ENCODE measurements at regions of chr7 and their contacts with region 1.

Region 1: GRCh38 chr7:99408379-99409191 is at the starts of genes BUD31 and PDAP1:
- DNase-seq: peak; percentile 85 to 95
- H3K4me3 ChIP-seq: peak within 1 kb of the TSS; percentile 99
- H3K27ac ChIP-seq: peak within 1 kb of the TSS; percentile 97
- H3K4me1 ChIP-seq: peaks cover 25% of the 10 kb centered on the region
- H3K27me3 ChIP-seq: no peaks in the 10 kb centered on the region
- CTCF ChIP-seq: no peak
- total RNA-seq, gene BUD31: 167 and 178 TPM in 2 replicates
- total RNA-seq, gene PDAP1: 141 and 180 TPM in 2 replicates

Region 2: GRCh38 chr7:99171731-99172130 is 236.9 kb before region 1 on chr7:
- CTCF ChIA-PET with region 1: no interaction called
- POLR2A ChIA-PET with region 1: no interaction called
- intact Hi-C with region 1: no loop called
- DNase-seq: no peak
- H3K4me3 ChIP-seq: no peak overlapping the region
- H3K27ac ChIP-seq: no peak overlapping the region
- H3K4me1 ChIP-seq: no peaks in the 10 kb centered on the region
- H3K27me3 ChIP-seq: no peaks in the 10 kb centered on the region
- CTCF ChIP-seq: no peak

Region 3: DNA sequence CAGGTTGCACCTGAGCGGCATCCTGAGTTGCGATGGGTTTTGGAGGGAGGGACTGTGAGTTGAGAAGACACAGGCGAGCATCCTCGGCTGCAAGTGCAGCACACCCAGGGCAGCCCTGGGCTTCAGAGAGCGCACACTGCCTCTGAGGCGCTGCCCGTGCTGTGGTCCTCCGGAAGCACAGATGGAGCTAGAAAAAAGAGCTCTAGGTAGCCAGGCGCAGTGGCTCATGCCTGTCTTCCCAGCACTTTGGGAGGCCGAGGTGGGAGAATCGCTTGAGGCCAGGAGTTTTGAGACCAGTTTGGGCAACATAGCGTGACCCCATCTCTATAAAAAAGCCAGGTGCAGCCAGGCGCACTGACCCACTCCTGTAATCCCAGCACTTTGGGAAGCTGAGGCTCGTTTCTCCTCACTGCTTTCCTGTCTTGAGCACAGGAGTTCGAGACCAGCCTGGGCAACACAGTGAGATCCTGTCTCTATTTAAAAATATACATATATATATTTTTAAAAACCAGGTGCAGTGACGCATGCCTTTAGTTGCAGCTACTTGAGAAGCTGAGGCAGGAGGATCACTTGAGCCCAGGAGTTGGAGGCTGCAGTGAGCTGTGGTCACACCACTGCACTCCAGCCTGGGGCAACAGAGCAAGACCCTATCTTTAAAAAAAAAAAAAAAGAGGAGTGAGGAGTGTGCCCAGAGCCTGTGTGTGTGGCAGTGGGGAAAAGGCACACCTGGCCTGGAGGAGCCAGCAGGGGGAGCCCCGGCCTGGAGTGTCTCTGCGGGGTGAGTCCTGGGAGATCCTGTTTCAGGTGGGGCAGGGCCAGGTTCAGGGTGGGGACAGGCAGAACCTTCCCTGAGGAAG is 43.4 kb before region 1 on chr7:
- CTCF ChIA-PET with region 1: no interaction called
- POLR2A ChIA-PET with region 1: no interaction called
- intact Hi-C with region 1: loop called (anchors 2 kb)
- DNase-seq: peak; percentile 56 to 80
- H3K4me3 ChIP-seq: no peak overlapping the region
- H3K27ac ChIP-seq: no peak overlapping the region
- H3K4me1 ChIP-seq: no peaks in the 10 kb centered on the region
- H3K27me3 ChIP-seq: no peaks in the 10 kb centered on the region
- CTCF ChIP-seq: peak; percentile 69

Region 4: GRCh38 chr7:99374103-99375064 is 34.2 kb before region 1 on chr7 and contains the start of gene ARPC1B:
- CTCF ChIA-PET with region 1: no interaction called
- POLR2A ChIA-PET with region 1: no interaction called
- intact Hi-C with region 1: loop called (anchors 2 kb)
- DNase-seq: peak; percentile 57 to 82
- H3K4me3 ChIP-seq: peak within 1 kb of the TSS; percentile 63
- H3K27ac ChIP-seq: no peak within 1 kb of the TSS
- H3K4me1 ChIP-seq: peaks cover 21% of the 10 kb centered on the region
- H3K27me3 ChIP-seq: no peaks in the 10 kb centered on the region
- CTCF ChIP-seq: no peak
- total RNA-seq, gene ARPC1B: 276 and 289 TPM in 2 replicates

Region 5: DNA sequence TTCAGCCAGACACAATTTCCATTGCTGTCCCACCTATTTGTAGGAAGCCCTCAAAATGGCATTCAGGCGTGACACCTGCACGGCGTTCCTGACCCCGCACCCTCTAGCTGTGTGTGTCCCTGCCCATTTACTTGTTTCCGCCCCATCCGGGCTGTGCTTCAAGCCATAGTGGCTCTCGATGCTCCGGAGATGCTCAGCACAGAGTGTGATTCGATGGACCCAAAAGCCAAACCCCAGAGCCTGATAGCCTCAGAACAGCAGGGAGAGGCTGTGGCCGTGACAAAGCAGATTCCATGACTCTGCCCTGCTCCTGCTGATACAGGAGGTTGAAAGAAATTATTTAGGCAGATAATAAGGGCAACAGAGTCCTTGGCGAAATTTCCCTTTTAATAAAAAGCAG is 13.6 kb after region 1 on chr7:
- CTCF ChIA-PET with region 1: no interaction called
- POLR2A ChIA-PET with region 1: interaction called, 11 read pairs
- intact Hi-C with region 1: no loop called
- DNase-seq: no peak
- H3K4me3 ChIP-seq: no peak overlapping the region
- H3K27ac ChIP-seq: no peak overlapping the region
- H3K4me1 ChIP-seq: no peaks in the 10 kb centered on the region
- H3K27me3 ChIP-seq: no peaks in the 10 kb centered on the region
- CTCF ChIP-seq: no peak

Region 6: DNA sequence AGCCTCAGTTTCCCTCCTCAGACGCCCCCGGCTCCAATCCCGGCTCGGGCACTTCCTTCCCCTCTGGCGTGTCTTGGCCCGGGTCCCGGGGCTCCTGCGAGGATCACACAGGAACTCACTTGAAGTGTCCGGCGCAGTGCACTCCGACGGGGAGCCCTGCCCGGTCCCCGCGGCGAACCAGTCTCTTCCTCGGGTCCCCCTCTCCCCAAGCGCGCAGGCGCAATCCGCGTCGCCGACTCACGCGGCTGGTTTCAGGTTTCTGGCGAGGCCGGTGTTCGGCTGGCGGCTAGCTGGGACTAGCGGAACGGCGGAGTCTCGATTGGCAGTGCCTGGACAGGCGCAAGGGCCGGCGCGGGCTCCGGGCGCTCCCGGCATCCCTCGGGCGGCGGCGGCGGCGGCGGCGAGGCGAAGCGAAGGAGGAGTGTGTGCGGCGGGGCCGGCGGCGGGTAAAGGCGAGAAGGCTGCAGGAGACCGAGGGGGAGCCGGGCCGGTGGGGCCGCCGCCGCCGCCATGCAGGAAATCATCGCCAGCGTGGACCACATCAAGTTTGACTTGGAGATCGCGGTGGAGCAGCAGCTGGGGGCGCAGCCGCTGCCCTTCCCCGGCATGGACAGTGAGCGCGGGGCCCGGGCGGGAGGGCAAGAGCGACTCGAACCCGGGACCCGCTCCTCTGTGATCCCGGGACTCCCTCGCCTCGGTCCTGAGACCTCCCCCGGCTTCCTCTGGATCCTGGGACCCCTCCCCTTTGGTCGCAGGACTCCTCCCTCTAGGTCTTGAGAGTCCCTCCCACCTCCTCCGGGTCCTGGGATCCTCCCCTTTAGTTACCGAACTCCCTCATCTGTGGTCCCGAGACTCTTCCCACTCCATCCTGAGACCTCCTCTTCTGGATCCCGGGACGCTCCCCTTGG is 30.2 kb after region 1 on chr7 and contains the starts of genes CPSF4 and PTCD1:
- CTCF ChIA-PET with region 1: no interaction called
- POLR2A ChIA-PET with region 1: interaction called, 3 read pairs
- intact Hi-C with region 1: loop called (anchors 2 kb)
- DNase-seq: peak; percentile 88 to 98
- H3K4me3 ChIP-seq: peak within 1 kb of the TSS; percentile 84
- H3K27ac ChIP-seq: peak within 1 kb of the TSS; percentile 33; the same call in 1 of the 2 replicates
- H3K4me1 ChIP-seq: peaks cover 15% of the 10 kb centered on the region; the same call in 1 of the 2 replicates
- H3K27me3 ChIP-seq: no peaks in the 10 kb centered on the region
- CTCF ChIP-seq: no peak
- total RNA-seq, gene CPSF4: 69.0 and 81.5 TPM in 2 replicates
- total RNA-seq, gene PTCD1: 8.0 and 8.8 TPM in 2 replicates

Region 7: DNA sequence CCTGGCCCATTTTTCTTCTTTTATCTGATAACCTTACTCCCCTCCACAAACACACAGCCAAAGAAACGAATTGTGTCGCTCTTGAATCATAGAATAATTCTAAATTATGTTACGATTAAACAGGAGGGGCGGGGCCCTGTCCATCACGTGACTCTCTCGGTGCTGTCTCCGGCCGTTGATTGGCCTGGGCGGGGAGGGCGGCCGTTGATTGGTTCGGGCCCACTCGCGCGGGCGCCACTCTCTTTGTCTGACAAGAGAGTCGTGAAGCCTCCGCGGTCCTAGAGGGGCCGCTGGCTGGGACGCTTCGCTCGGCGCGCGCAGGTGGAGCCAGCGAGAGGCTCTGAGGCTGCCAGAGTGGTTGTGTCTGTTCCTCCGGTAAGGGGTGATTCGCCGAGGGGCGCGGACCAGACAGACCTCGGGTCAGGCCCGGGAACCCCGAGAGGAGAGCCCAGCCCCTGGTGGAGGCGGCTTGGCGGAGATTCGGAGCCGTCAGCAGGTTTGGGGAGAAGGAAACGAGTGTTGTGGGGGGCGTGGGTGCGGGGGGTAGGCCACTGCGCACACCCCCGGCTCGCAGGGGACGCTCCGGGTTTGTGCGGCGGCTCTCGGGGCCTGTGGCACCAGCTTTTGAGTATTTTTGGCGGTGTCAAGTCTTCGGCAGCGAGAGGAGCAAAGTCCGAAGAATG is 64.1 kb after region 1 on chr7 and contains the start of gene ZNF789:
- CTCF ChIA-PET with region 1: no interaction called
- POLR2A ChIA-PET with region 1: interaction called, 24 read pairs
- intact Hi-C with region 1: loop called (anchors 1 kb)
- DNase-seq: peak; percentile 91 to 99
- H3K4me3 ChIP-seq: peak within 1 kb of the TSS; percentile 76
- H3K27ac ChIP-seq: peak within 1 kb of the TSS; percentile 89
- H3K4me1 ChIP-seq: peaks cover 10% of the 10 kb centered on the region
- H3K27me3 ChIP-seq: no peaks in the 10 kb centered on the region
- CTCF ChIP-seq: no peak
- total RNA-seq, gene ZNF789: 30.8 and 38.8 TPM in 2 replicates

Region 8: DNA sequence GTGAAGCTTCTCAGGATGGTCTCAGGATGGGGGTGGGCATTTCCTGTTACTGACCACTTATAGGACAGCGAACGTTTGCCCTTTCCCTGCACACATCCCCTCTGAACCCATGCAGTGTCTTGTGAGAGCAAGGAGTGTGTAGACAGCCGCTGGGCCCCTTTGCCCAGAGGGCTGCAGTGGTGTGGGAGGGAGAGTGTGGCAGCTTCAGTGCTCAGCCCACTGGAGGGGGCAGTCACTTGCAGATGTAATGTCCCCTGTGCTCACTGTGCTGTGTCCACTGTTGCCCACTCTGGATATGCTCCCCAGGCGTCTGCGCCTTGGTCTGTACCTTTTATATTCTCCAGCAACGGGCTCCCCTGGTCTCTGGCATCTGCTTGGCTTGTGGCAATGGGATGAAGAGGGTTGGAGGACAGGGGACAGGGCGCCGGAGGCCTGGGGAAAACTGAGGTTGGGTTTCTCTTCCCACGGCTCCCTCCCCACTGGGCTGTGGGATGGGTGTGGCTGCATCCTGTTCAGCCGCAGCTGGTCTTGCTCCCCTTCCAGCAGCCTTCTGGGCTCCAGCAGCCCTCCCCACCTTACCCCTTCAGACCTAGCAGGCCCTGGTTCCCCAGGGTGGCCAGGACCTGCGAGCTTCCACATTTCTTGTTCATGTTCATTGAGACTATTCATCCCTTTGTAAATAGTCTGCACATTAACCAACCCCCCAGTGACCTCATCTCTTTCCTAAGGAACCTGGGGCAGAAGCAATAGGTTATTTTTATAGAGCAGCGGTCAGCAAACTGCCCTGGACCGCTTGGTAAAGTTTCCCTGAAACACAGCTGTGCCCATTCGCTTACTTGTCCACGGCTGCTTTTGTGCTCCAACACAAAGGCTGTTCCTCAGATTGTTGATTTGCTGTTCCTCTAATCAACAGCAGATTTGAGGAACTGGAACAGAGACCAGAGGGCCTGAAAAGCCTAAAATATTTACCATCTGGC is 70.2 kb after region 1 on chr7:
- CTCF ChIA-PET with region 1: no interaction called
- POLR2A ChIA-PET with region 1: interaction called, 10 read pairs
- intact Hi-C with region 1: no loop called
- DNase-seq: no peak
- H3K4me3 ChIP-seq: no peak overlapping the region
- H3K27ac ChIP-seq: no peak overlapping the region
- H3K4me1 ChIP-seq: peaks cover 4% of the 10 kb centered on the region; the same call in 1 of the 2 replicates
- H3K27me3 ChIP-seq: no peaks in the 10 kb centered on the region
- CTCF ChIP-seq: no peak

Measured in PC-9 (cell line).